ENCODE measurements at regions of chr5 and their contacts with region 1.

Region 1: GRCh38 chr5:57298295-57298984 is 124.6 kb downstream of the GPBP1 start:
- DNase-seq: peak; percentile 74 to 80
- H3K4me3 ChIP-seq: no peak overlapping the region
- H3K27ac ChIP-seq: peak overlapping the region; percentile 48
- H3K4me1 ChIP-seq: peaks cover 11% of the 10 kb centered on the region; the same call in 1 of the 2 replicates
- H3K27me3 ChIP-seq: no peaks in the 10 kb centered on the region
- CTCF ChIP-seq: peak; percentile 86

Region 2: GRCh38 chr5:57327561-57328394 is 29.3 kb after region 1 on chr5:
- CTCF ChIA-PET with region 1: no interaction called
- POLR2A ChIA-PET with region 1: no interaction called
- intact Hi-C with region 1: no loop called
- DNase-seq: peak; percentile 73 to 96
- H3K4me3 ChIP-seq: 0 out of 2 replicates have a peak overlapping the region, but pooled peaks have one; percentile 12
- H3K27ac ChIP-seq: peak overlapping the region; percentile 79
- H3K4me1 ChIP-seq: peaks cover 21% of the 10 kb centered on the region
- H3K27me3 ChIP-seq: no peaks in the 10 kb centered on the region
- CTCF ChIP-seq: no peak

Region 3: DNA sequence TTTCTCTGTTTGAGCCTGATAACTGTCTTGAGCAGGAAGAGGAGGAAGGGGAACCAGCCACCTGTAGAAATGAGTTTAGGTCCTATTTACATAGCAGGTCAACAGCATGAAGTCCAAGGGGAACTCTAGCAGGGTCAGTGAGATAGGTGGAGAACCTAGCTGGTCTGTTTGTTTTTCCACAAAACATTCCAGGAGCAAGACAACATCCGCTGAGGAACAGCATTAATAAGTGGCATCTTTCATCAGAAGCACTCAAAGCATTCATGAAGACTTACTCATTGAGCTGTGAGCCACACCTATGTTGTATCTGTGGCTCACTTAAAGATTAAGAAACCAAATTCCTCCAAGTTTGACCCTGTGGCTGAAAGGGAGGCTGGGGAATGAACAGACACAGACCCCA is 68.3 kb after region 1 on chr5:
- CTCF ChIA-PET with region 1: no interaction called
- POLR2A ChIA-PET with region 1: no interaction called
- intact Hi-C with region 1: loop called (anchors 5 kb)
- DNase-seq: peak; percentile 55 to 98
- H3K4me3 ChIP-seq: no peak overlapping the region
- H3K27ac ChIP-seq: peak overlapping the region; percentile 92
- H3K4me1 ChIP-seq: peaks cover 58% of the 10 kb centered on the region
- H3K27me3 ChIP-seq: no peaks in the 10 kb centered on the region
- CTCF ChIP-seq: no peak

Region 4: GRCh38 chr5:57494104-57495098 is 196.0 kb after region 1 on chr5:
- CTCF ChIA-PET with region 1: no interaction called
- POLR2A ChIA-PET with region 1: interaction called, 4 read pairs
- intact Hi-C with region 1: loop called (anchors 1 kb)
- DNase-seq: peak; percentile 90 to 93
- H3K4me3 ChIP-seq: peak overlapping the region; percentile 28; the same call in 1 of the 2 replicates
- H3K27ac ChIP-seq: peak overlapping the region; percentile 95
- H3K4me1 ChIP-seq: peaks cover 44% of the 10 kb centered on the region
- H3K27me3 ChIP-seq: no peaks in the 10 kb centered on the region
- CTCF ChIP-seq: no peak

Region 5: DNA sequence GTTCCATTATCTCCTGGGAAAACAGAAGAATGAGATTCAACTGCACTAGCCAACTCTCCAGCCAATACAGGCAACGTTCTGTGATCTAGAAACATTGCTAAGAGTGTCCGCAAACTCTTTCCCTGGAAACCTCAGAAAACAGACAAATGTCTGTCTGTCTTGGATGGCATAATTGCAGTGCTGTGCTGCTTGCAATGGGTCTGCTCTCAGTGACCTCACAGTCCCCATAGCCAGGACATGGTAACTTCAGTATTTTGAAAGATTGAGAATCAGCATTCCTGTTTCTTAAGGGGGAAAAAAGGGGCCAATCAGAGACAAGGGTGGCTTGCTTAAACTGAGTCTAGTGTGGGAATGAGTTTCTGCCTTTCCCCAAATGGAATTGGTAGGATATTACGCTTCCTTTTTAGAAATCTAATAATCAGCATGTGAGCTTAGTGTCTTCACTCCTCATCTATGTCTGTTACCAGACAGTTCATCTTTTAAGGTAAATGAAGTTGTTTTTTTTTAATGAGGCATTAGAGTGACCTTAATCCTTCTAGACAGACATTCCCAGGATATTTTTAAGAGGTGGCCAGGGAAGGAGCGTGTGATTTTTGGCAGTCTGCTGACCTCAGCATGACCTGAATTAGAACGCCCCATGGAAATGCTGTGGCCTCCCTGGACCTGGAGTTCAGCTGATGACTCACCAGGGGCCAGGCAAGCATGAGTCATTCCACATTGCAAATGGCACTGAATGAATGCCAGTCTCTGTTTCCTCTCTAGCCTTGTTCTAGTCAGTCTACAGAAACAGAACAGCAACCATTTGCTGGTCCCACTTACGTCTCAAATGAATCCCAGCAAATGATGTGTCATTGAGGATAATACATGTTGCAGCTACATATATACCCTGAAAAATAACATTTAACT is 394.4 kb after region 1 on chr5:
- CTCF ChIA-PET with region 1: no interaction called
- POLR2A ChIA-PET with region 1: no interaction called
- intact Hi-C with region 1: loop called (anchors 2 kb)
- DNase-seq: peak; percentile 83 to 86
- H3K4me3 ChIP-seq: no peak overlapping the region; the same call in 1 of the 2 replicates
- H3K27ac ChIP-seq: peak overlapping the region; percentile 91
- H3K4me1 ChIP-seq: peaks cover 25% of the 10 kb centered on the region
- H3K27me3 ChIP-seq: no peaks in the 10 kb centered on the region
- CTCF ChIP-seq: no peak

Region 6: DNA sequence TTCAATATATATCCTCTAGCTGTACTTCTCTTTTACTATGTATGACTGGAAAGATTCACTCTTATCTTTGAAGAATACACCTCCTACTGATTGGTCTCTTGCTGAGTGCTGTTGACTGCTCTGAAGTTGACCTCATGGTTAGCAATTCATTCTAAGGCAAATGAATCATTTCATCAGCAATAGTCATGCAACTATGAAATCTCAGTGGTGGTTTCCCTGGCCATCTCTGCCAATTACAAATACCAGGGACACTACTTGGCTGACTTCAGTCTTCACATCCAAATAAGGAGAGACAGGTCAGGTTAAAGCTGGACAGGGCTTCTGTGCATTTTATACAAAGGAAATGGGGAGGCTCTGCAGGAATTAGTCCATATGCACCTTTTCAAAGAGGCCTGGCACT is 517.7 kb after region 1 on chr5:
- CTCF ChIA-PET with region 1: no interaction called
- POLR2A ChIA-PET with region 1: no interaction called
- intact Hi-C with region 1: loop called (anchors 2 kb)
- DNase-seq: peak; percentile 51 to 81
- H3K4me3 ChIP-seq: no peak overlapping the region
- H3K27ac ChIP-seq: peak overlapping the region; percentile 73
- H3K4me1 ChIP-seq: peaks cover 22% of the 10 kb centered on the region
- H3K27me3 ChIP-seq: no peaks in the 10 kb centered on the region
- CTCF ChIP-seq: no peak

Region 7: DNA sequence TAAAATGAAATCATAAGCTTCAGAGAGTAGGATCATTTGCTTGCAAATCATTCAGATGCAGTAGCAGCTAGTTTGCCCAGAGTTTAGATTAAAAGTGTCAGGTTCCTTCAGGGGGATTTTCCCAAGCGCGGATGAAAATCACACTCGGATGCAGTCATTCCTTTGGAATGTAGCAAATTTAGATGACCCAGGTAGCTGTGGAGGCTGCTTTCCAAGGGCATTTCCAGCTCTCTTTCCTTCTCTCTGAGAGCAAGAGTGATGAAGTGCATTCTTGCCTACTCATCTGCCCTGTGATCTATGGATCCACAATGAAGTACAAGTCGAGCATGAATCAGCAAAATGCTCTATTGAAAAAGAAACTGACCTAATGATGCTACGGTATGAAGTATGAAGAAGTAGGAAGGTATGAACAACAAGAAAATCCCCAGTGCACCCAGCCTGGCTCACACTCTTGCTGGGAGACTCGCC is 961.3 kb after region 1 on chr5:
- CTCF ChIA-PET with region 1: no interaction called
- POLR2A ChIA-PET with region 1: no interaction called
- intact Hi-C with region 1: loop called (anchors 1 kb)
- DNase-seq: peak; percentile 85 to 100
- H3K4me3 ChIP-seq: peak overlapping the region; percentile 44; the same call in 1 of the 2 replicates
- H3K27ac ChIP-seq: peak overlapping the region; percentile 98
- H3K4me1 ChIP-seq: peaks cover 42% of the 10 kb centered on the region
- H3K27me3 ChIP-seq: no peaks in the 10 kb centered on the region
- CTCF ChIP-seq: no peak

Region 8: DNA sequence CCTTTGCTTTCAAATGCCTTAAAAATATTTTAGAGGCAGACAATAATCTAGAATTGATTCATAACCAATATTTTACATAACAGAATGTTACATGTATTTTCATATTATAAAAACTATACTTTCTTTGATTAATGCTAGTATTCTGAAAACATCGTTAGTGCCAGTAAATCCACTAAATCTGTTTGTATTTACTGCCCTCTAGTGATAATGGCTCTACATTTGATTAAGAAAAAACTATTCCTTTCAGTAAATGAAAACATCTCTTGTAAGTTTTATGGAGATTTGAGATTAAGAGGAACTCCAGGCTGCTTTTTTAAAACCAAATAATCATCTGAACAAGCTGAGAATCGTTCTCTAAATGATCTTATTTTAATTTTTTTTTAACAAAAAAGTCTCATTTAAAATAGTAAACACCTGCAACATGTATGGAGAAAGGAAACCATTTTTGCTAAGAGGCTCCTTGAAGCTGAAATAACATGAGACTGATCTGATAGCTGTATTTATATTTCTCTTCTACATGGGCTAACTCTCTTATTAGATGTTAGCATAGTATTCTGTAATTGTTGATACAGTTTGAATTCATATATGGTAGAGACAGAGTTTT is 1709.1 kb after region 1 on chr5:
- CTCF ChIA-PET with region 1: no interaction called
- POLR2A ChIA-PET with region 1: no interaction called
- intact Hi-C with region 1: loop called (anchors 10 kb)
- DNase-seq: no peak
- H3K4me3 ChIP-seq: no peak overlapping the region
- H3K27ac ChIP-seq: no peak overlapping the region
- H3K4me1 ChIP-seq: no peaks in the 10 kb centered on the region
- H3K27me3 ChIP-seq: no peaks in the 10 kb centered on the region
- CTCF ChIP-seq: peak; percentile 71